PC-3 (cell line): ENCODE measurements at regions of chr20 and their contacts with region 1.

Region 1: GRCh38 chr20:11906626-11907480 is 10.8 kb upstream of the BTBD3 start:
- DNase-seq: peak; percentile 70
- ATAC-seq: peak; percentile 75
- H3K4me3 ChIP-seq: no peak overlapping the region
- H3K27ac ChIP-seq: peak overlapping the region; percentile 23
- H3K4me1 ChIP-seq: peaks cover 36% of the 10 kb centered on the region
- H3K27me3 ChIP-seq: no peaks in the 10 kb centered on the region
- CTCF ChIP-seq: no peak

Region 2: GRCh38 chr20:11890331-11891080 is 16.3 kb before region 1 on chr20:
- CTCF ChIA-PET with region 1: no interaction called
- POLR2A ChIA-PET with region 1: no interaction called
- intact Hi-C with region 1: loop called (anchors 2 kb)
- DNase-seq: peak; percentile 97
- ATAC-seq: peak; percentile 67
- H3K4me3 ChIP-seq: peak overlapping the region; percentile 82
- H3K27ac ChIP-seq: peak overlapping the region; percentile 55
- H3K4me1 ChIP-seq: peaks cover 24% of the 10 kb centered on the region
- H3K27me3 ChIP-seq: no peaks in the 10 kb centered on the region
- CTCF ChIP-seq: no peak

Region 3: DNA sequence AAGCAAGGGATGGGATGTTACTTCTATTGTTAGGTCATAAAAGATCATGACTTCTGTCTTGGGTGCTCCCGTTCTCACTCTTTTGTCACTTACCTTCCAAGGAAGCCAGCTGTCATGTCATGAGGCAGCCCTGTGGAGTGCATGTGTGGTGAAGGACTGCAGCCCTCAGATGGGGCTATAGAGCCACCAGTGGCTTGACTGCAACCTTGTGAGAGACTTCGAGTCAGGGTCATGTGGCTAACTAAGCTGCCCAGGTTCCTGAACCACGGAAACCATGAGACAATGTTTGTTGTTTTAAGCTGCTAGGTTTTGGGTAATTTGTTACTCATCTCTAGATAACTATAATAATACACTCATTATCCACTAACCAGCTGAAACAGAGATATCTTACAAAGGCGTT is 487.9 kb after region 1 on chr20:
- CTCF ChIA-PET with region 1: no interaction called
- POLR2A ChIA-PET with region 1: no interaction called
- intact Hi-C with region 1: no loop called
- DNase-seq: peak; percentile 70
- ATAC-seq: peak; percentile 38; the same call in 1 of the 2 replicates
- H3K4me3 ChIP-seq: no peak overlapping the region
- H3K27ac ChIP-seq: no peak overlapping the region
- H3K4me1 ChIP-seq: peaks cover 12% of the 10 kb centered on the region
- H3K27me3 ChIP-seq: no peaks in the 10 kb centered on the region
- CTCF ChIP-seq: peak; percentile 66